ENCODE measurements at regions of chr5 and their contacts with region 1.

Region 1: GRCh38 chr5:170747851-170748250 is 35.7 kb upstream of the GABRP start:
- H3K4me3 Mint-ChIP-seq: no peak overlapping the region
- H3K27ac Mint-ChIP-seq: no peak overlapping the region
- H3K4me1 Mint-ChIP-seq: peaks cover 4% of the 10 kb centered on the region
- H3K27me3 Mint-ChIP-seq: peaks cover 55% of the 10 kb centered on the region

Region 2: GRCh38 chr5:170791325-170791954 is 43.6 kb after region 1 on chr5:
- intact Hi-C with region 1: loop called (anchors 2 kb)
- H3K4me3 Mint-ChIP-seq: no peak overlapping the region
- H3K27ac Mint-ChIP-seq: no peak overlapping the region
- H3K4me1 Mint-ChIP-seq: no peaks in the 10 kb centered on the region
- H3K27me3 Mint-ChIP-seq: no peaks in the 10 kb centered on the region

Measured in dendritic cell treated with granulocyte-macrophage colony-stimulating factor and Interleukin-4, amounts not matched to agents 40 ng/mL and 50 ng/mL, for 4 days (primary cell).